GM23248 (cell line): ENCODE measurements at regions of chr16 and their contacts with region 1.

Region 1: GRCh38 chr16:24834459-24835335 is 11.1 kb upstream of the SLC5A11 start:
- DNase-seq: peak; percentile 58
- H3K4me3 ChIP-seq: no peak overlapping the region
- H3K27ac ChIP-seq: no peak overlapping the region
- H3K4me1 ChIP-seq: peaks cover 22% of the 10 kb centered on the region
- H3K27me3 ChIP-seq: no peaks in the 10 kb centered on the region

Region 2: DNA sequence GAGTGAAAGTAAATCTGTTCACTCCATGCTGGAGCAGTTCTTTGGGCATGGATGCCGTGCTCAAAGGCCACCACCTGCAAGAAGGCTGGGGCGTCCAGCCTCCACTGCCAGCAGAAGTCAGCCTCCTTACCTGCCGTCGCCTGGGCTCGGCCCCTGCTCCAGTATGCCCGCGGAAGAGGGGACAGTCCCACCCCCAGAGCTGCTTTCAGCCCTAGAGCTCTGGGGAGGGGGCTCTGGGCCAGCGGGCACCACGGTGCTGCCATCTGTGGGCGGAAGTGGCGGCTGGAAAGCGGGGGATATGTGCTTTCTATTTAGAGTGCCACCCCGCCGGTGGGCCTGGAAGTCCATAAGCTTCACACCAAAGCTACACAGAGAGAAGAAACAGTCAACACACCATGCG is 104.5 kb after region 1 on chr16:
- in situ Hi-C with region 1: loop called (anchors 10 kb)
- DNase-seq: no peak
- H3K4me3 ChIP-seq: no peak overlapping the region
- H3K27ac ChIP-seq: no peak overlapping the region
- H3K4me1 ChIP-seq: no peaks in the 10 kb centered on the region
- H3K27me3 ChIP-seq: no peaks in the 10 kb centered on the region

Region 3: GRCh38 chr16:24950275-24950674 is 115.6 kb after region 1 on chr16:
- in situ Hi-C with region 1: no loop called
- DNase-seq: peak; percentile 67
- H3K4me3 ChIP-seq: no peak overlapping the region
- H3K27ac ChIP-seq: no peak overlapping the region
- H3K4me1 ChIP-seq: peaks cover 6% of the 10 kb centered on the region
- H3K27me3 ChIP-seq: no peaks in the 10 kb centered on the region